CD4-positive, alpha-beta memory T cell (primary cell): ENCODE measurements at regions of chr19 and their contacts with region 1.

Region 1: DNA sequence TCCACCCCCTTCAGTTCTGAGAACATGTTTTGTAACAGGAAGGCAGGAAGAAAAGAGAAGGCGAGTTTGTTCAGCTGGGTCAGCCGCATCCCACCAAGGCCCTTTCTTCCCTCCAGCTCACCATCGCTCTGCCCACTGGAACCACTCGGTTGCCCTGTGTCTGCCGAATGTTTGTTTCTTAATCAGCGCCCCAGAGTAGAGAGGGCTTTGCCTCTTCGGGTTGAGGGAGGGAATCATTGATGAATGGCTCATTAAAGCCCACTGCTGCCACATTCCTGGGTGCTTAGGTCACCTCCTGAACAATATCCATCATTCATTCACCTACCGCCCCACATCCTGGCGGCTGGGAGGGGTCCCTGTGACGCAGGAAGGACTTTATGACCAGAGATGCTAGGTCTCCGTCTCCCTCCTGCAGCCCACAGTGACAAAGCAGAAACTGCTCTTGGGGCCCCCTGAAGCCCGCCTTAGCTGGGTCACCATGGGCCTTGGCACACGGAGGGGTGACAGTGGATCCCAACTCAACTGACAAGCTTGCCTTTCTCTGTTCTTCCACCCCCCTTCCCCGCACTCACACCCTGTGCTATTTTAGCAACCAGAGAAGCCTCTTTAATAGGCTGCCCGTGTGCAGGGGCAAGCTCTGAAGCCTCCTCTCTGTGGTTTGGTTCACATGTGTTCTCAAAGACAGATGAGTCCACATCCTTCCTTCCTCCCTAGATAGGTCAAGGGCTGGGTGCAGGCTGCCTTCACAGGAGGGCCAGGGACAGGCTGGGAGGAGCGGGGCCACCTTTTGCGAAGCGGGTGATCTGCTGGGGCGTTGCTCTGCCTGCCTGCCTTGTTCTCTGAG is 46.2 kb downstream of the ACTN4 start:
- DNase-seq: peak; percentile 56 to 69 (median 65)
- H3K4me3 ChIP-seq: peak overlapping the region in 1 of 2 donors; percentile 22
- H3K4me3 Mint-ChIP-seq: peak overlapping the region; percentile 65 to 82 (median 79)
- H3K27ac ChIP-seq: peak overlapping the region; percentile 32
- H3K27ac Mint-ChIP-seq: peak overlapping the region; percentile 81 to 92 (median 88)
- H3K4me1 ChIP-seq: peaks cover 98% of the 10 kb centered on the region
- H3K4me1 Mint-ChIP-seq: peaks cover 54 to 96% (median 77%) of the 10 kb centered on the region in 4 donors
- H3K27me3 ChIP-seq: no peaks in the 10 kb centered on the region
- H3K27me3 Mint-ChIP-seq: no peaks in the 10 kb centered on the region

Region 2: DNA sequence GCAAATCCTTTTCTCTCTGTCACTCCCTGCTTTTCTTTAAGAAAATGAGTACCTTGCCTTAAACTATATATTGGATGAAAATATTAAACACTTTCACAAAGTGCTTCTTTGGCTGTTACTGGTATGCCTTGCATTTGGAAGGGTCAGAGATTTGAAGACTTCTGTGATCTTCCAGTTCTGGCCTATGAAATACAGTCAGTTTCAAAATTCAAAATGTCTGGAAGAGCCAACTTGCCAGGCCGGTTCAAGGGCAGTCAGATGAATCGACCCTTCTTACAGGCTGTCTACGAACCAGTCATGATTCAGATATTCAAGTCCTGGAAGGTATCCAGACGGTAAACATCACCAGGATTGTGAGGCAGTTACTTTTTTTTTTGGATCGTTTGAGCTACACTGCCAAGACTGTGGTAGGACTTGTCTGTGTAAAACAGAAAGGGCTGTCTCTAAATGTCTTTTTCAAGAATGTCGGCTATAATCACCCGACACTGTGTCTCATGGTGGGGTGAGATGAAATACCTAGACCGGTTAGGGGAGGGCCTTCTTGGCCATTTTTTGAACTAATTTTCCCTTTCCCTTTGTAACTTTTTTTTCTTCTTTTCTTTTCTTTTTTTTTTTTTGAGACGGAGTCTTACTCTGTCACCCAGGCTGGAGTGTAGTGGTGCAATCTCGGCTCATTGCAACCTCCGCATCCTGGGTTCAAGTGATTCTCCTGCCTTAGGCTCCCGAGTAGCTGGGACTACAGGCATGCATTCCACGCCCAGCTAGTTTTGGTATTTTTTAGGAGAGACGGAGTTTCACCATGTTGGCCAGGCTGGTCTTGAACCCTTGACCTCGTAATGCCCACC is 34.9 kb before region 1 on chr19:
- CTCF ChIA-PET with region 1: no interaction called
- POLR2A ChIA-PET with region 1: interaction called, 10 read pairs
- intact Hi-C with region 1: loop called (anchors 2 kb)
- DNase-seq: no peak
- H3K4me3 ChIP-seq: no peak overlapping the region
- H3K4me3 Mint-ChIP-seq: peak overlapping the region in 3 of 8 donors; percentile 39 to 79 (median 46)
- H3K27ac ChIP-seq: peak overlapping the region; percentile 5
- H3K27ac Mint-ChIP-seq: peak overlapping the region in 6 of 7 donors; percentile 80 to 95 (median 92)
- H3K4me1 ChIP-seq: peaks cover 93% of the 10 kb centered on the region
- H3K4me1 Mint-ChIP-seq: peaks cover 45 to 94% (median 73%) of the 10 kb centered on the region in 4 donors
- H3K27me3 ChIP-seq: no peaks in the 10 kb centered on the region
- H3K27me3 Mint-ChIP-seq: no peaks in the 10 kb centered on the region

Region 3: DNA sequence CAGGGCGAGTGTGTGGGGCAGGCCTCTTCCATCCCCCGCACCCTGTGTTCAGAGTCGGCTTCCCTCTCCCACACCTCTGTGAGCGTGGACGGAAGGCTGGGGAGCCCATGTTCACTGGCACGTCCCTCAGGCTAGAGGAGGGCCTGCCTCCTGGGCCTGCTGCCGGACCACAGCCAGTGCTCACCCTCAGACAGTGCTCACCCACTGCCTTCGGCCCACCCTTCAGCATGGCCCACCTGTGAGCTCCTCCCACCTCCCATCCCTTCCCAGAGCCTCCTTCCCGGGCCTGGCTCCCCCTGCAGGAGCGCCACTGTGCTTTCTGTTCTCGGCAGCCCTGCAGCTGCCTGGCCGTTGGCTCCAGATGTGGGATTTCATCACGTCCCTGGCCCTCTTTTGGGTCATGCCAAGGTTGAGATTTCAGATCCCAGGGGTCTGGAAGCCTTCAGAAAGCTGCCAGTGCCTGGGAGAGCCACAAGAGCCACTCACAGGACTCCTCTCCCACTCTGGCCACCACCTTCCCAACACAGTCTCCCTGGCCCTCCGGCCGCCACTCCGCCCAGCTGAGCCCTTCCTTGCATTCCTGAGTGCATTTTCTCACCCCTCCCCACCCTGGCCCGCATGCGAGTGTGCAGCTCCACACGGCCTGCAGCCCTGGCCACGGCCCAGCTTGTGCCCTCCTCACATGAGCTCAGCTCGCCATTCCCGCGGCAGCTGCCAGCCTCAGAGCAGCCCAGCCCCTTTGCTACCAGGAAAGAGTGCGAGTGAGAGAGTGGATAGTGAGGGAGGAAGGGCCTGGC is 25.3 kb after region 1 on chr19:
- CTCF ChIA-PET with region 1: no interaction called
- POLR2A ChIA-PET with region 1: no interaction called
- intact Hi-C with region 1: no loop called
- DNase-seq: no peak
- H3K4me3 ChIP-seq: no peak overlapping the region
- H3K4me3 Mint-ChIP-seq: no peak overlapping the region
- H3K27ac ChIP-seq: no peak overlapping the region
- H3K27ac Mint-ChIP-seq: peak overlapping the region in 1 of 7 donors; percentile 24
- H3K4me1 ChIP-seq: no peaks in the 10 kb centered on the region
- H3K4me1 Mint-ChIP-seq: no peaks in the 10 kb centered on the region
- H3K27me3 ChIP-seq: no peaks in the 10 kb centered on the region
- H3K27me3 Mint-ChIP-seq: no peaks in the 10 kb centered on the region

Region 4: DNA sequence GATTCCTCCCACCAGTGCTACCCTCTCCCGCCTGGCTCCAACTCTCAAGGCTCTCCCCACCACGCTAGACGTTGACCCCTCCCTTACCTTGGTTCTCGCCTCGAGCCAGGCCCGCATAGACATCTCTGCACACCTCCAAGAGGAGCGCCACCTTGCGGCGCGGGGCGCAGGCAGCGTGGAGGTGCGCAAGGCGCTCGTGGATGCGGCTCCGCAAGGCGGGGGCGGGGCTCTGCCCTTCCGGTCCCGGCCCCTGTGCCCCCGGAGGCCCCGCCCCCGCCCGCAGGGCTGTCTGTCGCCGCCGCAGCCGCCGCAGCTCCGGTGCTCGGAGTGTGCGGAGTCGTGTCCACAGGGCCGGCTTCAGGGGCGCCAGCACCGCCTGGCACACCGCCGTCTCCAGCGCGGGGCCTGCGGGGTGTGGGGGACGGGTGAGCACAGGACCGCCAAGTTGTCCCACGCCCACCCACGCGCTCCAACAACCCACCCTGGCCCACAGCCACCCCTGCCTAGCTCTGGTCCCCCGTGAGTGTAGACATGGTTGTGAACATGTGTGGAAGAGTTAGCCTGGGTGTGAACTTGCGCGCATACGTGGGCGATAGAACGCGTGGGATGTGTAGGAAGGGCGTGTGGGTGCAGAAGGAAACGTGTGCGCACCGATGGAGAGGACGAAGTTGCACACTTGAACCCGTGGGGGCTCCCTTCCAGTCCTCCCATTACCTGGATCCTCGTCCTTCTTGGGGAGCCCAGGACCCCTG is 176.4 kb after region 1 on chr19:
- CTCF ChIA-PET with region 1: no interaction called
- POLR2A ChIA-PET with region 1: no interaction called
- intact Hi-C with region 1: no loop called
- DNase-seq: peak; percentile 92 to 96 (median 93)
- H3K4me3 ChIP-seq: peak overlapping the region; percentile 29 to 60
- H3K4me3 Mint-ChIP-seq: peak overlapping the region; percentile 88 to 94 (median 91)
- H3K27ac ChIP-seq: peak overlapping the region; percentile 66
- H3K27ac Mint-ChIP-seq: peak overlapping the region; percentile 83 to 97 (median 94)
- H3K4me1 ChIP-seq: peaks cover 40% of the 10 kb centered on the region
- H3K4me1 Mint-ChIP-seq: peaks cover 23 to 53% (median 38%) of the 10 kb centered on the region in 4 donors
- H3K27me3 ChIP-seq: no peaks in the 10 kb centered on the region
- H3K27me3 Mint-ChIP-seq: no peaks in the 10 kb centered on the region